Caco-2 (cell line): ENCODE measurements at regions of chr13 and their contacts with region 1.

Region 1: GRCh38 chr13:30802953-30803478 is 67.7 kb downstream of the ALOX5AP start:
- DNase-seq: peak; percentile 81 to 87
- H3K4me3 ChIP-seq: peak overlapping the region; percentile 27
- H3K4me3 Mint-ChIP-seq: peak overlapping the region; percentile 62
- H3K27ac Mint-ChIP-seq: no peak overlapping the region
- H3K4me1 ChIP-seq: peaks cover 5% of the 10 kb centered on the region; the same call in 1 of the 2 replicates
- H3K4me1 Mint-ChIP-seq: no peaks in the 10 kb centered on the region
- H3K27me3 ChIP-seq: no peaks in the 10 kb centered on the region
- H3K27me3 Mint-ChIP-seq: no peaks in the 10 kb centered on the region
- CTCF ChIP-seq: peak; percentile 93 to 96

Region 2: DNA sequence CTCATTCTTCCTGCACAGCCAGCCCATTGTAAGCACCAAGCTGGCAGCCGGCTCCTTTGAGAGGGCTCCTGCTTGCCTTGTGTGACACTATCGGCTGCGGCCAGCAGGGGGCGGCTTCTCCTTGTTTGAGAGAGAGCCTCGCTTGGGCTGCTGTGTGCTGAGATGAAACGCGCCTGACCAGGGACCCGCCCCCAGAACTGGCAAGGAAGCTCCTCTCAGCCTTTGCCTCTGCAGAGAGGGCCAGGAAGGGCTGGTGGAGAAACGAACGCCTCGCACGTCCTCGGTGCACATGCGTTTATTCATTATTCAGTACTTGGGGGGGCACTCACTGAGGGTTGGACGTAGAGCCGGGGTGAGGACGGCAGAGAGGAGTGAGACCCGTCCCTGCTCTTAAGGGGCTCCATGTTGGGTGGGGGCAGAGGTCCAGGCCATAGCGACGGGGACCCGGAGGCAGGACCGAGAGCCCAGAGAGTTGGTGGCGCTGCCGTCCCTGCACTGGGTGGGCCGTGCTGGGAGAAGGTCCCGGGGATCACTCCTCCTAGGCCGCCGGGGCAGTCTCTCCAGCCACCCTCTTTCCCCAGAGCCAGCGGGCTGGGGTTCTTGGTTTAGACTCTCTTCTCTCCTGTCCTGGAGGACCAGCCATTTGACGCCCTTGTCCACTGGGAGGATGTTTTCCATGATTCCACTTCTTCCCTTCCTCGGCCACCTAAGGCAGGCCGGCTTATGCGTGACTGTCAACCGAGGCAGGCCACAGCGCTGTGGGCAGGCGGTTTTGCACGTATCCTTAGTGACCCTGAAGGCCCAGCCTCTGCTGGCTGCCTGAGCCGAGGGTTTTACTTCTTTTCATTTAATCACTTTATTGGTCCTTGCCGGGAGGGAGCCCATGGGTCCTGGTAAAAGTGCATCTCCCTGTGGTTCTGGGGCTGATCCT is 670.1 kb before region 1 on chr13:
- CTCF ChIA-PET with region 1: no interaction called
- POLR2A ChIA-PET with region 1: no interaction called
- intact Hi-C with region 1: loop called (anchors 10 kb)
- DNase-seq: peak; percentile 94 to 96
- H3K4me3 ChIP-seq: no peak overlapping the region
- H3K4me3 Mint-ChIP-seq: no peak overlapping the region
- H3K27ac Mint-ChIP-seq: no peak overlapping the region
- H3K4me1 ChIP-seq: peaks cover 5% of the 10 kb centered on the region; the same call in 1 of the 2 replicates
- H3K4me1 Mint-ChIP-seq: peaks cover 12% of the 10 kb centered on the region
- H3K27me3 ChIP-seq: no peaks in the 10 kb centered on the region
- H3K27me3 Mint-ChIP-seq: no peaks in the 10 kb centered on the region
- CTCF ChIP-seq: peak; percentile 92 to 95

Region 3: DNA sequence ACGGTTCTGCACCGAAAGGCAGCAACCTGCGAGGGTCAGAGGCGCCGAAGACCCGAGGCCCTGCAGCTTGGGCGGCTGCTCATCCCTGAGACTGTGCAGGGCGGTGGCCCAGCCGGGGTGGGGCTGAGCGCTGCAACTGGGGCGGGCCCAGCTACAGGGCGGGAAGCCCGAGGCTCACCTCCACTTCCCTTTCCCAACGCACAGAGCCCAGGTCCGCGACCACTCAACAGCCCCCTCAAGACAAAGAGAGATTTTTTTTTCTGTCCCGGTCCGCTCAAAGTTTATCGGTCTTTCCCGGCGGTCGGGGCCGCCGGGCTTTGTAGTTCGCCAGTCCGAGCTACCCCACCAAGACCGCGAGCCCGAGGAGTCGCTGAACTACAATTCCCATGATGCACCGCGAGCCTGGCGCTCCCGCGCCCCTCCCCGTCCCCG is 496.2 kb before region 1 on chr13:
- CTCF ChIA-PET with region 1: no interaction called
- POLR2A ChIA-PET with region 1: no interaction called
- intact Hi-C with region 1: no loop called
- DNase-seq: peak; percentile 95
- H3K4me3 ChIP-seq: peak overlapping the region; percentile 82
- H3K4me3 Mint-ChIP-seq: peak overlapping the region; percentile 77
- H3K27ac Mint-ChIP-seq: peak overlapping the region; percentile 51
- H3K4me1 ChIP-seq: 0 out of 2 replicates have a peak, but pooled peaks cover 5% of the 10 kb centered on the region
- H3K4me1 Mint-ChIP-seq: no peaks in the 10 kb centered on the region
- H3K27me3 ChIP-seq: no peaks in the 10 kb centered on the region
- H3K27me3 Mint-ChIP-seq: peaks cover 6% of the 10 kb centered on the region
- CTCF ChIP-seq: no peak

Region 4: DNA sequence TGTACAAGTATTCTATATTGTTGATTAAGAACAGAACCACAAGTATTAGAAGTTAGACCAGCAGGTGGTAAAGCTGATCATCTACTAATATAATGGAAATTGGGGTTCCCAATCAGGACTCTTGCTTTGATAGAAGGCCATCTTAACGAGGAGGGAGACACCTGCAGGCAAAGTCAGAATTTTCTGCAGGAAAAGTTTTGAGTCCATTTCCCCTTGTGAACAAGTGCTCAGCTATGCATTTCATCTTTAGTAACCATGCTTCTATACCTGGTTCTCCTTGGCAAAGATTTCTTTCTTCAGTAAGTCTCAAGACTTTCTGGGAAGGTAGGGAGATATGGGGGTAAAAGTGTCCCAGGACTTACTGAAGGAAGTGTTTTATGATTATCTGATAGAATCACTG is 221.4 kb before region 1 on chr13:
- CTCF ChIA-PET with region 1: no interaction called
- POLR2A ChIA-PET with region 1: no interaction called
- intact Hi-C with region 1: no loop called
- DNase-seq: peak in 1 of 2 experiments; percentile 35
- H3K4me3 ChIP-seq: no peak overlapping the region
- H3K4me3 Mint-ChIP-seq: no peak overlapping the region
- H3K27ac Mint-ChIP-seq: no peak overlapping the region
- H3K4me1 ChIP-seq: no peaks in the 10 kb centered on the region
- H3K4me1 Mint-ChIP-seq: peaks cover 8% of the 10 kb centered on the region
- H3K27me3 ChIP-seq: no peaks in the 10 kb centered on the region; the same call in 1 of the 2 replicates
- H3K27me3 Mint-ChIP-seq: no peaks in the 10 kb centered on the region
- CTCF ChIP-seq: peak; percentile 50 to 51

Region 5: DNA sequence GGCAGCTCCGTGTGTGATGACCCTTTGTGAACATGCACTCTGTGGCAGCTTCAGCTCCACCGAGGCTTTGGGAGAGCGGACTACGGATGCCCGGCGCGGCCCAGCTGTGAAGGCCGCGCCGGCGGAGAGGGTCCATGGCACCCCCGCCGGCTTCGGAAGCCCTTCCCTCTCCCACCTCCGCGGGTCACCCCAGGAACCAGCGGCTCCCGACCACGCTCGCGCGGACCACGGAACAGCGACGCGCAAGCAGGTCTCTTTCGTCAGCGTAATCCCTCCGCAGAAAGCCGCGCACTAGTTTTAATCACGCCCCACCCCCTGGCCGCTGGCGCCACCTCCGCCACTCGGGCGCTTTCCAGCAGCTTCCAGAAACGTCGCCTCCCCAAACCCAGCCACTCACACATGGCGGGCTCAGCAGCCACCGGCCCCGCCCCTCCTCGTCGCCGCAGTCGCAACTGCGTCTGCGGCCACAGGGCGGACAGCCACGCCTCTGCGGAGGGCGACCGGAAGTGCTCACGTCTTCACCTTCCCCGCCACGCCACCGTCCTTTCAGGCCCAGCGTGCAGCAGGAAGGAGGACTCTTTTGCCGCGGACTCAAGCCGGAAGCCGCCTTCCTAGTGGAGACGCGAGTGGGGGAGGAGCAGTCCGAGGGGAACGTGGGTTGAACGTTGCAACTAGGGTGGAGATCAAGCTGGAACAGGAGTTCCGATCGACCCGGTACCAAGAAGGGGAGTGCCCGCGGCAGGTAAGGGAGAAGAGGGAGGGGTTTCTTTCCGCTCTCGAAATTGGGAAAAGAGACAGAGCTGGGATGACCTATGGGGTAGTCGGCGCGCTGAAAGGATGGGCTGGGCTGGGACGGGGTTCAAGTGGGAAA is 185.5 kb before region 1 on chr13 and contains the start of gene USPL1:
- CTCF ChIA-PET with region 1: interaction called, 3 read pairs
- POLR2A ChIA-PET with region 1: no interaction called
- intact Hi-C with region 1: loop called (anchors 5 kb)
- DNase-seq: peak; percentile 99
- H3K4me3 ChIP-seq: peak within 1 kb of the TSS; percentile 61
- H3K4me3 Mint-ChIP-seq: no peak within 1 kb of the TSS
- H3K27ac Mint-ChIP-seq: no peak within 1 kb of the TSS
- H3K4me1 ChIP-seq: 0 out of 2 replicates have a peak, but pooled peaks cover 8% of the 10 kb centered on the region
- H3K4me1 Mint-ChIP-seq: no peaks in the 10 kb centered on the region
- H3K27me3 ChIP-seq: no peaks in the 10 kb centered on the region
- H3K27me3 Mint-ChIP-seq: no peaks in the 10 kb centered on the region
- CTCF ChIP-seq: no peak
- total RNA-seq, gene USPL1: 23.4 and 26.7 TPM in 2 replicates

Region 6: GRCh38 chr13:30711375-30711774 is 91.6 kb before region 1 on chr13:
- CTCF ChIA-PET with region 1: interaction called, 3 read pairs
- POLR2A ChIA-PET with region 1: no interaction called
- intact Hi-C with region 1: loop called (anchors 1 kb)
- DNase-seq: no peak
- H3K4me3 ChIP-seq: no peak overlapping the region
- H3K4me3 Mint-ChIP-seq: no peak overlapping the region
- H3K27ac Mint-ChIP-seq: no peak overlapping the region
- H3K4me1 ChIP-seq: 0 out of 2 replicates have a peak, but pooled peaks cover 7% of the 10 kb centered on the region
- H3K4me1 Mint-ChIP-seq: peaks cover 6% of the 10 kb centered on the region
- H3K27me3 ChIP-seq: no peaks in the 10 kb centered on the region
- H3K27me3 Mint-ChIP-seq: no peaks in the 10 kb centered on the region
- CTCF ChIP-seq: no peak

Region 7: GRCh38 chr13:30865123-30866049 is 62.4 kb after region 1 on chr13:
- CTCF ChIA-PET with region 1: interaction called, 3 read pairs
- POLR2A ChIA-PET with region 1: interaction called, 5 read pairs
- intact Hi-C with region 1: loop called (anchors 1 kb)
- DNase-seq: peak; percentile 71 to 72
- H3K4me3 ChIP-seq: no peak overlapping the region
- H3K4me3 Mint-ChIP-seq: no peak overlapping the region
- H3K27ac Mint-ChIP-seq: peak overlapping the region; percentile 16
- H3K4me1 ChIP-seq: 0 out of 2 replicates have a peak, but pooled peaks cover 7% of the 10 kb centered on the region
- H3K4me1 Mint-ChIP-seq: peaks cover 12% of the 10 kb centered on the region
- H3K27me3 ChIP-seq: no peaks in the 10 kb centered on the region
- H3K27me3 Mint-ChIP-seq: peaks cover 2% of the 10 kb centered on the region
- CTCF ChIP-seq: peak; percentile 84 to 95

Region 8: GRCh38 chr13:31044377-31045285 is 241.6 kb after region 1 on chr13:
- CTCF ChIA-PET with region 1: interaction called, 10 read pairs
- POLR2A ChIA-PET with region 1: no interaction called
- intact Hi-C with region 1: loop called (anchors 1 kb)
- DNase-seq: peak; percentile 81 to 87
- H3K4me3 ChIP-seq: no peak overlapping the region
- H3K4me3 Mint-ChIP-seq: no peak overlapping the region
- H3K27ac Mint-ChIP-seq: no peak overlapping the region
- H3K4me1 ChIP-seq: peaks cover 19% of the 10 kb centered on the region
- H3K4me1 Mint-ChIP-seq: no peaks in the 10 kb centered on the region
- H3K27me3 ChIP-seq: no peaks in the 10 kb centered on the region
- H3K27me3 Mint-ChIP-seq: no peaks in the 10 kb centered on the region
- CTCF ChIP-seq: peak; percentile 94 to 97